HCT116 (cell line): ENCODE measurements at regions of chr14 and their contacts with region 1.

Region 1: GRCh38 chr14:50003213-50004031 is 110.5 kb downstream of the ARF6 start:
- DNase-seq: peak; percentile 65
- ATAC-seq: peak; percentile 35
- H3K4me3 ChIP-seq: peak overlapping the region; percentile 63 to 64
- H3K27ac ChIP-seq: peak overlapping the region; percentile 90
- H3K4me1 ChIP-seq: peaks cover 66 to 81% of the 10 kb centered on the region in 2 experiments
- H3K27me3 ChIP-seq: no peaks in the 10 kb centered on the region
- CTCF ChIP-seq: peak in 1 of 3 experiments; percentile 11; a peak in 1 of 6 replicates
- POLR2A ChIP-seq: peak; percentile 87
- RAD21 ChIP-seq: no peak

Region 2: GRCh38 chr14:49862089-49862673 is 141.2 kb before region 1 on chr14:
- CTCF ChIA-PET with region 1: interaction called, 10 read pairs
- POLR2A ChIA-PET with region 1: interaction called, 6 read pairs
- RAD21 ChIA-PET with region 1: interaction called in 1 of 2 experiments, 3 read pairs
- intact Hi-C with region 1: loop called (anchors 2 kb)
- DNase-seq: peak; percentile 82
- ATAC-seq: peak; percentile 63
- H3K4me3 ChIP-seq: peak overlapping the region; percentile 77 to 80
- H3K27ac ChIP-seq: peak overlapping the region; percentile 74
- H3K4me1 ChIP-seq: peaks cover 9 to 41% of the 10 kb centered on the region in 2 experiments; a peak in 3 of 4 replicates
- H3K27me3 ChIP-seq: no peaks in the 10 kb centered on the region
- CTCF ChIP-seq: peak; percentile 100
- POLR2A ChIP-seq: no peak
- RAD21 ChIP-seq: peak; percentile 64

Region 3: DNA sequence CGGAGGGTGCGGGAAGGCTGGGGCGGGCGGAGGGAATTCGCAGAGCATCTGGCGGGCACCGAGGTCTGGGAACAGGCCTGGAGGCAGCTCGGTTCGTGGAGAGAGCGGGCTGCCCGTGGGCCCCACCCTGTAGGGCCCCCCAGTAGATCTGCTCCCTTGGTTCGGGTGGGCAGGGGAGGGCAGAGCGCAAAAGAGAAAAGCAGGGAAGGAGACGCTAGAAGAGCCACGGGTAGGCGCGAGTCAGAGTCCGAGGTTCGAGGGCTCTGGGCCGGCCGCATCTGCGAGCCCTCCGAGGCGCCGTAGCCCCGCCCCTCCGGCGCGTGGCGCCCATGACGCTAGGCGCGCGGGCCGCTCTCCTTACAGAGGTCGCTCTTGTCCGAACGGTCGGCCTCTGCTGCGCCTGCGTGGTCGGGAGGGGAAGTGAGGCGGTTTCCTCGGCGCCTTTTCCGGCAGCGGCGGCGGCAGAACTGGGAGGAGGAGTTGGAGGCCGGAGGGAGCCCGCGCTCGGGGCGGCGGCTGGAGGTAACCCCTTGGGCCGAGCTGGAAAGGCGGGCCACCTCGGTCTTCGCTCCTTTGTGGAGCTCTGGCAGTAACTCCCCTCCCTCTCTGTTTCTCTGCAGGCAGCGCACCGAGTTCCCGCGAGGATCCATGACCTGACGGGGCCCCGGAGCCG is 110.7 kb before region 1 on chr14 and contains the start of gene ARF6:
- CTCF ChIA-PET with region 1: no interaction called
- POLR2A ChIA-PET with region 1: interaction called, 7 read pairs
- RAD21 ChIA-PET with region 1: no interaction called
- intact Hi-C with region 1: loop called (anchors 5 kb)
- DNase-seq: peak; percentile 90
- ATAC-seq: peak; percentile 93
- H3K4me3 ChIP-seq: peak within 1 kb of the TSS; percentile 72 to 94
- H3K27ac ChIP-seq: peak within 1 kb of the TSS; percentile 99
- H3K4me1 ChIP-seq: peaks cover 27 to 52% of the 10 kb centered on the region in 2 experiments
- H3K27me3 ChIP-seq: no peaks in the 10 kb centered on the region
- CTCF ChIP-seq: no peak
- POLR2A ChIP-seq: peak; percentile 73
- RAD21 ChIP-seq: peak; percentile 43; the same call in 1 of the 2 replicates
- total RNA-seq, gene ARF6: 88.8 TPM

Region 4: DNA sequence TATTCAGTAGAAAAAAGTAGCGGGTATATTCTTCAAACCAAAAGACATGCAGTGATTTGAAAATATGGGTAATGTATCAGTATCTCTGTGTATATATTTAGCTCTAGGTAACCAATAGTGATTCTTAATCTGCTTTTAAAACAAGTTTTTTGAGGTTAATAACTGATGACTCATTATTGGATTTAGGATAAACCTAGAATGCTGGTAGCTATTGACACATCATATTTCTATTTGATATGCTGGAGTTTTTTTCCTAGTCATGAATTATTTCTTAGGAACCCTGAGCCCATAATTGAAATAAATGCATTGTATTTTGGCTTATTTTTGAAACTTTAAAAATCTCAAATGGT is 95.0 kb before region 1 on chr14:
- CTCF ChIA-PET with region 1: no interaction called
- POLR2A ChIA-PET with region 1: interaction called, 5 read pairs
- RAD21 ChIA-PET with region 1: interaction called in 1 of 2 experiments, 3 read pairs
- intact Hi-C with region 1: loop called (anchors 5 kb)
- DNase-seq: no peak
- ATAC-seq: peak; percentile 11
- H3K4me3 ChIP-seq: no peak overlapping the region
- H3K27ac ChIP-seq: peak overlapping the region; percentile 72
- H3K4me1 ChIP-seq: peaks cover 38 to 66% of the 10 kb centered on the region in 2 experiments
- H3K27me3 ChIP-seq: no peaks in the 10 kb centered on the region
- CTCF ChIP-seq: no peak
- POLR2A ChIP-seq: no peak
- RAD21 ChIP-seq: no peak

Region 5: GRCh38 chr14:49977126-49977841 is 26.1 kb before region 1 on chr14:
- CTCF ChIA-PET with region 1: interaction called, 4 read pairs
- POLR2A ChIA-PET with region 1: interaction called, 26 read pairs
- RAD21 ChIA-PET with region 1: interaction called, 3 read pairs
- intact Hi-C with region 1: no loop called
- DNase-seq: no peak
- ATAC-seq: no peak
- H3K4me3 ChIP-seq: no peak overlapping the region
- H3K27ac ChIP-seq: peak overlapping the region; percentile 96; the same call in 1 of the 2 replicates
- H3K4me1 ChIP-seq: peaks cover 44 to 56% of the 10 kb centered on the region in 2 experiments
- H3K27me3 ChIP-seq: no peaks in the 10 kb centered on the region
- CTCF ChIP-seq: no peak
- POLR2A ChIP-seq: no peak
- RAD21 ChIP-seq: no peak

Region 6: DNA sequence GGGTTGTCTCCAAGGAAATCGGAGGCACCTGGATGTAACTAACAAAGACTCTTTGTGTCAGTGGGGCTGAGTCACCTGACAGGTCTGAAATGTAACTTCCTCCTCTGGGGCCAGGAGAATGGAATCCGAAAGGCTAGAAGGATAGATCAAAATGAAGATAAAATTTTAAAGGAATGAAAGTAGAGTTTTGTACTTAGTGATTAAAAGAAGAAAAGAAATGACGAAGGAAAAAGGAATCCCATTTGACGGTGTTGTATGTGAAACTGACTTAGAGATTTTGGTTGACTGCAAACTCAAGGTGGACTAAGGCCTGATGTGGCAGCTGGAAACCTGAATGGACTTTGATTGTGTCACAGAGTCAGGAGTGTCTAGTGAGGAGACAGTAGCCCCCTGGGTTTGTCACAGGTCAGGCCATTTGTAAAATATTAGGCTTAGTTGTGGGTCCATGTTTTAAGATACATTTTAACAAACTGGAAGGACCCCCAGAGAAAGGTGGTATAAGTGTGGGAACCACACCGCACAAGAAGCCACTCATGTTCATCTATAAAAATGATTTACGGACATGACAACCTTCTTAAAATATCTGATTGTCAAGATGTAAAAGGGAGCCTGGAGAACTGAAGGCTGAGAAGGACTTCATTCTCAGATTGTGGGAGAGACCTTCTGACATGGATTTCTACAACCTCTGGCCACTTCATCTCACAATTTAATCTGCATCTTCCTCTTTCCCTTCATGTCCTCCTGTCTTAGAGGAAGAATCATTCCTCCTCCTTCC is 10.3 kb after region 1 on chr14:
- CTCF ChIA-PET with region 1: interaction called, 3 read pairs
- POLR2A ChIA-PET with region 1: interaction called, 15 read pairs
- RAD21 ChIA-PET with region 1: no interaction called
- intact Hi-C with region 1: no loop called
- DNase-seq: peak; percentile 85
- ATAC-seq: peak; percentile 90
- H3K4me3 ChIP-seq: no peak overlapping the region
- H3K27ac ChIP-seq: peak overlapping the region; percentile 73
- H3K4me1 ChIP-seq: peaks cover 38 to 60% of the 10 kb centered on the region in 2 experiments
- H3K27me3 ChIP-seq: no peaks in the 10 kb centered on the region
- CTCF ChIP-seq: no peak
- POLR2A ChIP-seq: no peak
- RAD21 ChIP-seq: peak; percentile 21; the same call in 1 of the 2 replicates

Region 7: GRCh38 chr14:50070840-50071548 is 67.6 kb after region 1 on chr14:
- CTCF ChIA-PET with region 1: no interaction called
- POLR2A ChIA-PET with region 1: no interaction called
- RAD21 ChIA-PET with region 1: no interaction called
- intact Hi-C with region 1: no loop called
- DNase-seq: no peak
- ATAC-seq: no peak
- H3K4me3 ChIP-seq: no peak overlapping the region
- H3K27ac ChIP-seq: no peak overlapping the region
- H3K4me1 ChIP-seq: peaks cover 5 to 13% of the 10 kb centered on the region in 2 experiments; a peak in 3 of 4 replicates
- H3K27me3 ChIP-seq: no peaks in the 10 kb centered on the region
- CTCF ChIP-seq: no peak
- POLR2A ChIP-seq: no peak
- RAD21 ChIP-seq: no peak

Region 8: DNA sequence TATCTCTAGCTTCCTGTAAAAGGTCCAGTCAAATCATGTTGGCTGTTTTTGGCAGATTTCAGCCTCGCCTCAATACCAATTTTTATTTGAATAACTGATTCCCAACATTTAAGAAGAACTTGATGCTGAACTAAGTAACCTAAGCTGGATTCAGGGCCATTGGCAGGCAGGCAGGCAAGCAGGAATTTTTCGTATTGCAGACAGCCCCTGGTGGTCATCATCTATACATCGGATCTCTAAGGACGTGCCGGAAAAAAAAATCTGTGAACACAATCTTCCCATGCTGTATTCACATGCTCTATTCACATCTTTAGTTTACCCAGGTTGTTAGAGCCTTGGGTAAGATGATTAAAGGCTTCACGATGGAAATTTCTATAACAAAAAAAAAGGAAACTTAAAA is 105.9 kb after region 1 on chr14:
- CTCF ChIA-PET with region 1: no interaction called
- POLR2A ChIA-PET with region 1: no interaction called
- RAD21 ChIA-PET with region 1: interaction called in 1 of 2 experiments, 4 read pairs
- intact Hi-C with region 1: loop called (anchors 5 kb)
- DNase-seq: peak; percentile 4
- ATAC-seq: peak; percentile 46; the same call in 1 of the 2 replicates
- H3K4me3 ChIP-seq: no peak overlapping the region
- H3K27ac ChIP-seq: no peak overlapping the region
- H3K4me1 ChIP-seq: peaks cover 0 to 4% of the 10 kb centered on the region in 2 experiments; a peak in 1 of 4 replicates
- H3K27me3 ChIP-seq: no peaks in the 10 kb centered on the region
- CTCF ChIP-seq: peak in 2 of 3 experiments; percentile 43 to 50; a peak in 3 of 6 replicates
- POLR2A ChIP-seq: no peak
- RAD21 ChIP-seq: peak; percentile 25; the same call in 1 of the 2 replicates